ENCODE measurements at regions of chr10 and their contacts with region 1.

Region 1: DNA sequence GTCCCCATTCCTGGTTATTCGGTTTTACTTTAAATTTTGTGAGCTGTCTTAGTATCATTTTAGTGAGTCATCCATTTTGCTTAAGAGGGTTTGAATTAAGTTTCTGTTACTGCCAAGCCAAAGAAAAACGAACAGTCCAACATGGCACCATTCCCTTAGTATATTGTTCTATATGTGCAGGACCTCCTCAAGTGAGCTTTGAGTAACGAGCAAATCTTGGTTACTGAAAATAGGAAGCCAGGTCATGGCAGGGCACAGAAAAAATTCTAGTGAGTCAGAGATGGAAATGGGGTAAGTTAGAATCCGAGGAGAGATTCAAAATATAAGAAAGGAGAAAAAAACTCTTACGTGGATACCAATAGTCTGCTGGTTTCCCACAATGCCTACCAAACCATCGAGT is 292.9 kb downstream of the BAMBI start:
- DNase-seq: no peak
- H3K4me3 ChIP-seq: no peak overlapping the region
- H3K27me3 ChIP-seq: peaks cover 1% of the 10 kb centered on the region
- CTCF ChIP-seq: no peak

Region 2: GRCh38 chr10:28922127-28922526 is 48.1 kb before region 1 on chr10:
- CTCF ChIA-PET with region 1: no interaction called
- POLR2A ChIA-PET with region 1: interaction called, 12 read pairs
- DNase-seq: no peak
- H3K4me3 ChIP-seq: no peak overlapping the region
- H3K27me3 ChIP-seq: no peaks in the 10 kb centered on the region
- CTCF ChIP-seq: no peak

Measured in BJ (cell line).